Vagina (tissue), 2 donors: ENCODE measurements at regions of chr2 and their contacts with region 1.

Region 1: GRCh38 chr2:152635635-152636298 is 81.5 kb downstream of the PRPF40A start:
- DNase-seq: no peak
- H3K4me3 ChIP-seq: no peak overlapping the region
- H3K27ac ChIP-seq: no peak overlapping the region
- H3K4me1 ChIP-seq: no peaks in the 10 kb centered on the region
- H3K27me3 ChIP-seq: no peaks in the 10 kb centered on the region
- CTCF ChIP-seq: peak; percentile 47 to 84 (median 68)
- POLR2A ChIP-seq: no peak

Region 2: GRCh38 chr2:152189622-152190495 is 445.9 kb before region 1 on chr2:
- intact Hi-C with region 1: loop called (anchors 5 kb)
- DNase-seq: no peak
- H3K4me3 ChIP-seq: no peak overlapping the region
- H3K27ac ChIP-seq: no peak overlapping the region
- H3K4me1 ChIP-seq: no peaks in the 10 kb centered on the region
- H3K27me3 ChIP-seq: no peaks in the 10 kb centered on the region
- CTCF ChIP-seq: peak; percentile 58 to 73 (median 73)
- POLR2A ChIP-seq: no peak